ENCODE measurements at regions of chr18 and their contacts with region 1.

Region 1: GRCh38 chr18:51171223-51171622 is 26.3 kb downstream of the MEX3C start:
- DNase-seq: no peak
- H3K4me3 Mint-ChIP-seq: peak overlapping the region; percentile 52
- H3K27ac Mint-ChIP-seq: peak overlapping the region; percentile 97
- H3K4me1 Mint-ChIP-seq: peaks cover 67% of the 10 kb centered on the region
- H3K27me3 Mint-ChIP-seq: no peaks in the 10 kb centered on the region

Region 2: DNA sequence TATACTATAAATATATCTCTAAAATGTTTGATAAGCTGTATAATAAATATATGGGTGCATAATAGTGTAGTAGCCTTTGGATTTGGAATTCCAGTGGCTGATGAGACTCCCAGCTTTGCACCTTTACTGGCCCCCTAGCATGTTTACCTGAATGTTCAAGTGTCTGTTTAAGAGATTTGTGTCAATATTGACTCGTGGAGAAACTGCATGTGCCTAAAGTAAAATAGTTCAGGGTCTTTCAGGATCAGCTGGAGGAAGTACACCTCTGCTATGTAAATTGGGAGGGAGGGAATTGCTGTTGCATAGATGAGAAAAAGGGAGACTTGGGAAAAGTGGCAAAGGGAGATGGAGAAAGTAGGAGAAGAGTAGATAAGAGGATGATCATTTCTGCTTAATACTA is 268.4 kb before region 1 on chr18:
- CTCF ChIA-PET with region 1: no interaction called
- intact Hi-C with region 1: loop called (anchors 1 kb)
- DNase-seq: no peak
- H3K4me3 Mint-ChIP-seq: no peak overlapping the region
- H3K27ac Mint-ChIP-seq: no peak overlapping the region
- H3K4me1 Mint-ChIP-seq: peaks cover 35% of the 10 kb centered on the region
- H3K27me3 Mint-ChIP-seq: no peaks in the 10 kb centered on the region

Region 3: DNA sequence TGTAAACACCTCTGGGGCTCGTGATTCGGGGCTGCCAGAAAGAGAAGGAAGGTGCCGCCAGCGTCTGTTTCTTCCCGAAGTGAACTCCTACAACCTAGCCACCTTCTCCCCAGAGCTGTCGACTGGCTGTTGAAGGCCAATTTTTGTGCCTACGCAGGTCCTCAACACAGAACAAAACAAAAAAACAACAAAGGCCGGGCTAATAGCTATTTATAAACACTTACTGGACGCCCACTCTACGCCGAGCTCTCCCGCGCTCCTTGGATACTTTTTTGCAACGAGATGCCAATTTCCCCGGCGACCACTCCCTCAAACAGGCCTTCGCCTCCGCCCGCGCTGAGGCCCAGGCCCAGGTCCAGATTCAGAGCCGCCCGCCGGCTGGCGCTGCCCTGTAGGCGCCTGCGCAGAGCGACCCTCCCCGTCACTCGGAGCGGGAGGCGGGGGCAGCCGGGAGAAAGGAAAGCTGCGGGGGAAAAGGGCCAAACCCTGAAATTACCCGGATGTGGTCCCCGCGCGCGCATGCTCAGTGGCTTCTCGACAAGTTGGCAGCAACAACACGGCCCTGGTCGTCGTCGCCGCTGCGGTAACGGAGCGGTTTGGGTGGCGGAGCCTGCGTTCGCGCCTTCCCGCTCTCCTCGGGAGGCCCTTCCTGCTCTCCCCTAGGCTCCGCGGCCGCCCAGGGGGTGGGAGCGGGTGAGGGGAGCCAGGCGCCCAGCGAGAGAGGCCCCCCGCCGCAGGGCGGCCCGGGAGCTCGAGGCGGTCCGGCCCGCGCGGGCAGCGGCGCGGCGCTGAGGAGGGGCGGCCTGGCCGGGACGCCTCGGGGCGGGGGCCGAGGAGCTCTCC is 141.3 kb before region 1 on chr18 and contains the start of gene SMAD4:
- CTCF ChIA-PET with region 1: no interaction called
- intact Hi-C with region 1: loop called (anchors 1 kb)
- DNase-seq: peak; percentile 98
- H3K4me3 Mint-ChIP-seq: peak within 1 kb of the TSS; percentile 98
- H3K27ac Mint-ChIP-seq: peak within 1 kb of the TSS; percentile 97
- H3K4me1 Mint-ChIP-seq: peaks cover 45% of the 10 kb centered on the region
- H3K27me3 Mint-ChIP-seq: no peaks in the 10 kb centered on the region
- total RNA-seq, gene SMAD4: 72.0 to 75.1 TPM

Region 4: DNA sequence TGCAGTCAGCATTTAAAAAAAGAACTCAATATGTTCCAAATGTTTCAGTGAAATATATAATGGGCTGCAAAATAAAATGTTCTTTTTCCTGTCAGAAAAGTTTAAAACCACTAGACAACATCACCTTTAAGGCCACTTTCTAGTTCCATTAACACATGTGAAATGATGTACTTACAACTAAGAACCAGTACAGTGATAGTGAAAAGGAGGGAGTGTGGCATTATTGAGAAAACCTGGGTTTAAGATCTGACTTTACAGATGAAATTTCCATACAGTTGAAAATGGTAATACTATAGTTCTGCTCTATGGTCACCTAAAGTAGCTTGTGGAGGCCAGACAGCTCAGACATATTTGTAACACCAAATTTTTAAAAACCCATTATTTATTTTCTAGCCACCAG is 11.6 kb after region 1 on chr18:
- CTCF ChIA-PET with region 1: interaction called, 3 read pairs
- intact Hi-C with region 1: loop called (anchors 1 kb)
- DNase-seq: no peak
- H3K4me3 Mint-ChIP-seq: no peak overlapping the region
- H3K27ac Mint-ChIP-seq: peak overlapping the region; percentile 41
- H3K4me1 Mint-ChIP-seq: peaks cover 68% of the 10 kb centered on the region
- H3K27me3 Mint-ChIP-seq: no peaks in the 10 kb centered on the region

Region 5: GRCh38 chr18:51211552-51211951 is 40.3 kb after region 1 on chr18:
- CTCF ChIA-PET with region 1: interaction called, 3 read pairs
- intact Hi-C with region 1: loop called (anchors 1 kb)
- DNase-seq: peak; percentile 71
- H3K4me3 Mint-ChIP-seq: no peak overlapping the region
- H3K27ac Mint-ChIP-seq: no peak overlapping the region
- H3K4me1 Mint-ChIP-seq: peaks cover 13% of the 10 kb centered on the region
- H3K27me3 Mint-ChIP-seq: no peaks in the 10 kb centered on the region

Region 6: GRCh38 chr18:51425889-51426288 is 254.7 kb after region 1 on chr18:
- CTCF ChIA-PET with region 1: no interaction called
- intact Hi-C with region 1: loop called (anchors 5 kb)
- DNase-seq: peak; percentile 7
- H3K4me3 Mint-ChIP-seq: no peak overlapping the region
- H3K27ac Mint-ChIP-seq: peak overlapping the region; percentile 77
- H3K4me1 Mint-ChIP-seq: peaks cover 5% of the 10 kb centered on the region
- H3K27me3 Mint-ChIP-seq: peaks cover 17% of the 10 kb centered on the region